Colonic mucosa (tissue), 4 donors: ENCODE measurements at regions of chr18 and their contacts with region 1.

Region 1: DNA sequence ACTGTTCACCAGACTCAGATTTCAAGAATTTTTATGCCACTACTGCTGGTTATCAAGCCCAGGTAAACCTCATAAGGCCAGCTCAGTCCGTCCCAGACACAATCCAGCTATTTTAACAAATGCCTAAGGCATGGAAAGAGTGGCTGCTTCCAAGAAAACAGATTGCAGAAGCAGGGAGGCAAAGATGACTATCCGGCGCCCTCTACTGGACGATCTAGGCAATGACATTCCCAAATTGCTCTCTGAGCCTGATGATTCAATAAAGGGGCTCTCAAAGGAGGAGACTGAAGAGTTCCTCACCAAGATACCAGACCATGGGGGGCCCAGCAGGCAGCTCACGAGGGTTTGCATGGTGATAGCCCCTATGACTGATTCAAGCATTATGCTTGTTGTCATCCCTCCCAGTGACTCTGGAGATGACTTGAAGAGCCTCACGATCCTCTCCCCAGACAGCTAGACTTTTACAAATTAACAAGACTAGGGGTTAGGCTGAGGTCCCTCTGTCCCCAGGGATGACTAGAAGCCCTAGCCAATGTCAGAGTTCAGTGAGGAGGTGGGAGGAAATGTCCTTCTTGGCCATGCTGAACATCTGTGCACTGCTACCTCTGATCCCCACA is 25.0 kb downstream of the SERPINB8 start:
- DNase-seq: peak; percentile 31
- H3K4me3 ChIP-seq: no peak overlapping the region
- H3K27ac ChIP-seq: no peak overlapping the region
- H3K4me1 ChIP-seq: no peaks in the 10 kb centered on the region
- H3K27me3 ChIP-seq: no peaks in the 10 kb centered on the region
- CTCF ChIP-seq: peak; percentile 82

Region 2: GRCh38 chr18:63890950-63891304 is 104.0 kb before region 1 on chr18:
- intact Hi-C with region 1: loop called (anchors 10 kb)
- DNase-seq: no peak
- H3K4me3 ChIP-seq: no peak overlapping the region
- H3K27ac ChIP-seq: no peak overlapping the region
- H3K4me1 ChIP-seq: no peaks in the 10 kb centered on the region
- H3K27me3 ChIP-seq: no peaks in the 10 kb centered on the region
- CTCF ChIP-seq: no peak

Region 3: DNA sequence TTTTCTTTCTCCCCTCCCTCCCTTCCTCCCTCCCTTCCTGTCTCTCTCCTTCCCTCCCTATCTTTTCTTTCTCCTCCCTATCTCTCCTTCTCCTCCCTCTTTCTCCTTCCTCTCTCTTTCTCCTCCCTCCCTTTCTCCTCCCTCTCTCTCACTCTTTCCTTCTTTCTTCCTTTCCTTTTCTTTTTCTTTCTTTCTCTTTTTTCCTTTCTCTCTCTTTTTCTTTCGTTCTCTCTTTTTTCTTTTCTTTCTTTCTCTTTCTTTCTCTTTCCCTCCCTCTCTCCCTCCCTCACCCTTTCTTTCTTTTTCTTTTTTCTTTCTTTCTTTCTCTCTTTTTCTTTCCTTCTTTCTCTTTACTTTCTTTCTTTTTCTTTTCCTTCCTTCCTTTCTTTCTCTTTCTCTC is 323.7 kb after region 1 on chr18:
- intact Hi-C with region 1: no loop called
- DNase-seq: no peak
- H3K4me3 ChIP-seq: no peak overlapping the region
- H3K27ac ChIP-seq: no peak overlapping the region
- H3K4me1 ChIP-seq: no peaks in the 10 kb centered on the region
- H3K27me3 ChIP-seq: no peaks in the 10 kb centered on the region
- CTCF ChIP-seq: no peak